Caco-2 (cell line): ENCODE measurements at regions of chr10 and their contacts with region 1.

Region 1: DNA sequence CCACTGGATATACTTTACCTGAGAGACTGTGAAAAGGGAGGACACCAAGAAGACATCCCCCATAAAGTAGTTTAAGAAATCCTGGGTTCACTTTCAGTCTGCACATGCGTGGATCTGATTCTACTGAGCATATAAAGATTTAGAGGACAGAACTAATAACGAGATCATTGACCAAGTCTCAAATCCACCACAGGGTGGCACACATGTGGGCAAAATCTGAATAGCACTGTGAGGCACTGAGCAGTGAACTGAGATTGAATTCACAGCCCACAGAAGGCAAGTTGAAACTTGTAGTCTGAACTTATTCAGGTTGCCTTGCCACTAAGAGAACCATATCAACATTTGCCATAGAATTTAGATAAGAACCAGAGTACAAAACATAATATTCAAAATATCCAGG is 818.6 kb downstream of the GRID1 start:
- DNase-seq: peak; percentile 40 to 50
- H3K4me3 ChIP-seq: no peak overlapping the region
- H3K4me3 Mint-ChIP-seq: no peak overlapping the region
- H3K27ac Mint-ChIP-seq: no peak overlapping the region
- H3K4me1 ChIP-seq: no peaks in the 10 kb centered on the region
- H3K4me1 Mint-ChIP-seq: peaks cover 12% of the 10 kb centered on the region
- H3K27me3 ChIP-seq: no peaks in the 10 kb centered on the region
- H3K27me3 Mint-ChIP-seq: no peaks in the 10 kb centered on the region
- CTCF ChIP-seq: peak; percentile 37 to 52

Region 2: DNA sequence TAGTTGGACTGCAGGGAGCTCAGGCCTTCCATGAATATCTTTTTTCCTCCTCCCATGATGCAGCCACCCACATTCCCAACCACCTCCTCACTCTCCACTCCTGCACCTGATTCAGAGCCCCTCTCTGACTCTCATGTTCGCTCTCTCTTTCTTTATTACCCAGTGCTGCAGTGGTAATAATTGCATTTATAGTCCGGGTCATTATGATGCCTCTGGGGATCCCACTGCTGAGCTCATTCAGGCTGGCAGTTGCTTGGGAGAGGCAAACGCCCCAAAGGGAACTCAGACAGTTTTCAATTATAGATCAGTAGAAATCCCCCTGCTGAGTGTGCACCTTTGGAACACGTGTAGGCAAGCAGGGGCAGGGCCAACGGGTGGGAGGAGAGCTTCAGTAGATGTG is 134.5 kb before region 1 on chr10:
- CTCF ChIA-PET with region 1: no interaction called
- POLR2A ChIA-PET with region 1: no interaction called
- intact Hi-C with region 1: loop called (anchors 10 kb)
- DNase-seq: no peak
- H3K4me3 ChIP-seq: no peak overlapping the region
- H3K4me3 Mint-ChIP-seq: peak overlapping the region; percentile 22
- H3K27ac Mint-ChIP-seq: no peak overlapping the region
- H3K4me1 ChIP-seq: peaks cover 38% of the 10 kb centered on the region
- H3K4me1 Mint-ChIP-seq: peaks cover 13% of the 10 kb centered on the region
- H3K27me3 ChIP-seq: no peaks in the 10 kb centered on the region
- H3K27me3 Mint-ChIP-seq: no peaks in the 10 kb centered on the region
- CTCF ChIP-seq: no peak

Region 3: DNA sequence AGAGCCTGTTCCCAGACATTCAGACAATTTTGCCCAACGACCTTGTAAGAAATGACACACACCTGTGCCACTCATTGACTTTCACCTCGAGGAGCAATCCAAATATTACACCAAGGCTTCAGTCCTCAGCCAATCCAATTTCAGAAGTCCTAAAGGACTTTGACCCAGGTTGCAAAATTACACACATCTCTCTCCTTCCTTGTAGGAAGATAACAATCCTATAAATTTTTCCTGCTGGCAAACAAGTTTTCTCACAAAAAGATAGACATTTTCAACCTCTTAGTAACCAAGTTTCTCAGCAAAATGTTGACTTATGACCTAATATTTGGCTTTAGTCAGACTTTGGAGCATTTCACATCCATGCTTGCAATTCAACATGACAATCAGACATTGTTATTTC is 73.5 kb after region 1 on chr10:
- CTCF ChIA-PET with region 1: interaction called, 3 read pairs
- POLR2A ChIA-PET with region 1: no interaction called
- intact Hi-C with region 1: loop called (anchors 1 kb)
- DNase-seq: peak; percentile 54 to 72
- H3K4me3 ChIP-seq: no peak overlapping the region
- H3K4me3 Mint-ChIP-seq: peak overlapping the region; percentile 48
- H3K27ac Mint-ChIP-seq: peak overlapping the region; percentile 74
- H3K4me1 ChIP-seq: peaks cover 32% of the 10 kb centered on the region
- H3K4me1 Mint-ChIP-seq: peaks cover 28% of the 10 kb centered on the region
- H3K27me3 ChIP-seq: no peaks in the 10 kb centered on the region
- H3K27me3 Mint-ChIP-seq: no peaks in the 10 kb centered on the region
- CTCF ChIP-seq: no peak

Region 4: DNA sequence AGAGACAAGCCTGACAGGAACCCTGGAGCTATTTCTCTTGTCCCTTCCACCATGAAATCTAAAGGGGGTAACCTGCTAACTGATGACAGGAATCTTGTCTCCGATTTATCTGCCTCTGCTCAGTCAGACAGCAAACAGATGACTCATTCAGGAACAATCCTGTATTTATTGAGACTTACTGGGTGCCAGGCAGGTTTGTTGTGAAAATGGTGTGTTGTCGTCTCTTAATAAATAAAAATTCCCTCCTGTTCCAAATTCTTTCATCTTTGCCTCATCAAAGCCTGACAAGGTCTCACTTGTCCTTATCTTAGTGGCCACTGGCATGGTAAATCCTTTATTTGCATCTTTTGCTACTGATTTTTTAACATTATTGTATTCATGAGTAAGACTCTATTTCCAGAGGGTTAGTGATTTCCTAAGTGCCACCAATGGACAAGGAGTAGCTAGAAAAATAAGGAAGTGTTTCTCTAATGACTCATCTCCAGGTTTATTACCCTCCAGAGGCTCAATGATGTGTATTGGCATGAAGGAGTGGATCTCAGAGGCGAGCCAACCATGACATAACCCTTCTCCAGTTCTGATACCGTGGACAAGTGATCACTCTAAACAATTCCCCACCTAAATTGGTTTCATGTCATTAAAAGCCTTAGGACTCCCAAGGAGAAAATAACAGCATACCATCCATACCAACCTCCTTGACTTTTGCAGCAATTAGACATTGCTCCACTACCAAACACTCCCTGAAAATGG is 94.6 kb after region 1 on chr10:
- CTCF ChIA-PET with region 1: no interaction called
- POLR2A ChIA-PET with region 1: no interaction called
- intact Hi-C with region 1: loop called (anchors 2 kb)
- DNase-seq: peak; percentile 58 to 72
- H3K4me3 ChIP-seq: no peak overlapping the region
- H3K4me3 Mint-ChIP-seq: peak overlapping the region; percentile 37
- H3K27ac Mint-ChIP-seq: peak overlapping the region; percentile 90
- H3K4me1 ChIP-seq: peaks cover 53% of the 10 kb centered on the region
- H3K4me1 Mint-ChIP-seq: peaks cover 36% of the 10 kb centered on the region
- H3K27me3 ChIP-seq: no peaks in the 10 kb centered on the region
- H3K27me3 Mint-ChIP-seq: no peaks in the 10 kb centered on the region
- CTCF ChIP-seq: no peak

Region 5: GRCh38 chr10:85661123-85661522 is 113.1 kb after region 1 on chr10:
- CTCF ChIA-PET with region 1: no interaction called
- POLR2A ChIA-PET with region 1: no interaction called
- intact Hi-C with region 1: no loop called
- DNase-seq: no peak
- H3K4me3 ChIP-seq: no peak overlapping the region
- H3K4me3 Mint-ChIP-seq: no peak overlapping the region
- H3K27ac Mint-ChIP-seq: no peak overlapping the region
- H3K4me1 ChIP-seq: no peaks in the 10 kb centered on the region
- H3K4me1 Mint-ChIP-seq: no peaks in the 10 kb centered on the region
- H3K27me3 ChIP-seq: no peaks in the 10 kb centered on the region
- H3K27me3 Mint-ChIP-seq: no peaks in the 10 kb centered on the region
- CTCF ChIP-seq: no peak

Region 6: GRCh38 chr10:85761906-85762445 is 213.9 kb after region 1 on chr10:
- CTCF ChIA-PET with region 1: no interaction called
- POLR2A ChIA-PET with region 1: no interaction called
- intact Hi-C with region 1: loop called (anchors 10 kb)
- DNase-seq: no peak
- H3K4me3 ChIP-seq: no peak overlapping the region
- H3K4me3 Mint-ChIP-seq: no peak overlapping the region
- H3K27ac Mint-ChIP-seq: no peak overlapping the region
- H3K4me1 ChIP-seq: no peaks in the 10 kb centered on the region
- H3K4me1 Mint-ChIP-seq: no peaks in the 10 kb centered on the region
- H3K27me3 ChIP-seq: no peaks in the 10 kb centered on the region
- H3K27me3 Mint-ChIP-seq: no peaks in the 10 kb centered on the region
- CTCF ChIP-seq: no peak

Region 7: GRCh38 chr10:85902051-85902450 is 354.0 kb after region 1 on chr10:
- CTCF ChIA-PET with region 1: no interaction called
- POLR2A ChIA-PET with region 1: no interaction called
- intact Hi-C with region 1: no loop called
- DNase-seq: no peak
- H3K4me3 ChIP-seq: no peak overlapping the region
- H3K4me3 Mint-ChIP-seq: no peak overlapping the region
- H3K27ac Mint-ChIP-seq: no peak overlapping the region
- H3K4me1 ChIP-seq: no peaks in the 10 kb centered on the region
- H3K4me1 Mint-ChIP-seq: no peaks in the 10 kb centered on the region
- H3K27me3 ChIP-seq: no peaks in the 10 kb centered on the region
- H3K27me3 Mint-ChIP-seq: peaks cover 3% of the 10 kb centered on the region
- CTCF ChIP-seq: no peak